ENCODE measurements at regions of chr15 and their contacts with region 1.

Region 1: DNA sequence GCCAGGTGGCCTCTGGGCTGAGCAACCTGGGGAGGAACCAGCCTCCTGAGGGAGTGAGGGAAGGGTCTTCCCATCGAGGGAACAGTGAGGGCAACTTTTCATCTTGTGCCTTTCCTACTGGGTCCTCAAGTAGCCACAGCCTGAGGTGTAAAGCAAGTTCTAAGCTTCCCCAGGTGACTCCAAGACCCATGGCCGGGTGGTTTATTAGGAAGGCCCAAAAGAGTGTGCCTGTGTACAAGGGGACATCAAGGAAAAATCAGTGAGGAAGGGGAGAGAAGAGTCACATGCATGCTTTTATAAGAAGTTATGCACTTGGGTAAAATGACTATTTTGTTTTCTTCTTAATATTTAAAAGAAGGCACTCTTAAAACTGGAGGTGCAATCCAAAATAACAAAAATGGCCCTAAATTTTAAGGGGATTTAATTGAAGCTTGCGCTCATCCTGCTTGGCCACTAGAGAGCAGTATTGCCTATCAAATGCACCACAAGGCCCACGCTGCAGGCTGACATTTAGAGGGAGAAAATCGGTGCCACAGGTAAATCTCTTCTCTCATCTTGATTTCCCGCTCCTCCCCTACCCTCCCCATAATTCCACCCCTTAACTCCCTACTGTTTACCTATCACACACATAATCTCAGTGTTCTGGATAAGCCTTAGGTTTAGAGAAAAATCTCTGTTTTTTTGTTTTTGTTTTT is 6.7 kb downstream of the NANOGP8 start:
- DNase-seq: no peak
- H3K4me3 ChIP-seq: no peak overlapping the region
- H3K27me3 ChIP-seq: no peaks in the 10 kb centered on the region
- CTCF ChIP-seq: peak; percentile 76

Region 2: GRCh38 chr15:35089551-35089950 is 11.2 kb after region 1 on chr15:
- CTCF ChIA-PET with region 1: interaction called, 21 read pairs
- POLR2A ChIA-PET with region 1: no interaction called
- DNase-seq: no peak
- H3K4me3 ChIP-seq: no peak overlapping the region
- H3K27me3 ChIP-seq: no peaks in the 10 kb centered on the region
- CTCF ChIP-seq: no peak

Region 3: DNA sequence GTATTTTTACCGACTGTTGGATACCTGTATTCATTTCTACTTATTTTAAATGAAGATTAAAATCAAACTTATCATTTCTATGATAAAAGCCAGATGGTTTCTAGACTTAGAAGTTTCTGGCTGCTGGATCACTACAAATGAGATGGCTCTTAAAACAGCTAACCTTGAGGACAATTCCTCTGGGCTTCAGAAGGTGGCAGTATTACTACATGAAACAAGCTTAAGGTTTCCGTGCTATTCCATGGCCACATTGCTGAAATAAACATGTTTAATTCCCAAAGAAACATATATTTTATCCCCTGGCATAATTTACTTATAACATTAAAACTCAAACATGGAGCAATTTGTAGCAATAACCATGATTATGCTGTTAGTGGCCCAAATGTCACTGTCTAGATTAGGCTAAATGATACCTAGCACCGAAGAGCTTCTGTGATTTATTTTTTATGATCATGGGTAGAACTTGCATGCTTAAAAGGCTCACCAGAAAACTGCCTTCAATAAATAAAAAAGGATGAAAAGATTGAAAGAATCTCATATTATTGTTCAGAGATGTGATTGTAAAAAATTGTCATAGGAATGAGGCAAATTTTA is 210.8 kb after region 1 on chr15:
- CTCF ChIA-PET with region 1: interaction called, 20 read pairs
- POLR2A ChIA-PET with region 1: no interaction called
- DNase-seq: no peak
- H3K4me3 ChIP-seq: no peak overlapping the region
- H3K27me3 ChIP-seq: no peaks in the 10 kb centered on the region
- CTCF ChIP-seq: peak; percentile 80